ENCODE measurements at regions of chr7 and their contacts with region 1.

Region 1: GRCh38 chr7:107743567-107744344 is at the start of gene CBLL1:
- DNase-seq: peak; percentile 95 to 98 (median 97)
- ATAC-seq: peak; percentile 95
- H3K4me3 ChIP-seq: peak within 1 kb of the TSS; percentile 90
- H3K4me3 Mint-ChIP-seq: peak within 1 kb of the TSS; percentile 93 to 100 (median 98)
- H3K27ac ChIP-seq: peak within 1 kb of the TSS; percentile 99
- H3K27ac Mint-ChIP-seq: peak within 1 kb of the TSS; percentile 99 to 100 (median 100)
- H3K4me1 ChIP-seq: peaks cover 35 to 36% of the 10 kb centered on the region in 2 donors
- H3K4me1 Mint-ChIP-seq: peaks cover 28 to 58% (median 54%) of the 10 kb centered on the region in 7 donors
- H3K27me3 ChIP-seq: no peaks in the 10 kb centered on the region
- H3K27me3 Mint-ChIP-seq: peaks cover 0 to 3% (median 0%) of the 10 kb centered on the region in 5 donors
- total RNA-seq, gene CBLL1: 41.5 to 54.4 (median 51.1) TPM

Region 2: DNA sequence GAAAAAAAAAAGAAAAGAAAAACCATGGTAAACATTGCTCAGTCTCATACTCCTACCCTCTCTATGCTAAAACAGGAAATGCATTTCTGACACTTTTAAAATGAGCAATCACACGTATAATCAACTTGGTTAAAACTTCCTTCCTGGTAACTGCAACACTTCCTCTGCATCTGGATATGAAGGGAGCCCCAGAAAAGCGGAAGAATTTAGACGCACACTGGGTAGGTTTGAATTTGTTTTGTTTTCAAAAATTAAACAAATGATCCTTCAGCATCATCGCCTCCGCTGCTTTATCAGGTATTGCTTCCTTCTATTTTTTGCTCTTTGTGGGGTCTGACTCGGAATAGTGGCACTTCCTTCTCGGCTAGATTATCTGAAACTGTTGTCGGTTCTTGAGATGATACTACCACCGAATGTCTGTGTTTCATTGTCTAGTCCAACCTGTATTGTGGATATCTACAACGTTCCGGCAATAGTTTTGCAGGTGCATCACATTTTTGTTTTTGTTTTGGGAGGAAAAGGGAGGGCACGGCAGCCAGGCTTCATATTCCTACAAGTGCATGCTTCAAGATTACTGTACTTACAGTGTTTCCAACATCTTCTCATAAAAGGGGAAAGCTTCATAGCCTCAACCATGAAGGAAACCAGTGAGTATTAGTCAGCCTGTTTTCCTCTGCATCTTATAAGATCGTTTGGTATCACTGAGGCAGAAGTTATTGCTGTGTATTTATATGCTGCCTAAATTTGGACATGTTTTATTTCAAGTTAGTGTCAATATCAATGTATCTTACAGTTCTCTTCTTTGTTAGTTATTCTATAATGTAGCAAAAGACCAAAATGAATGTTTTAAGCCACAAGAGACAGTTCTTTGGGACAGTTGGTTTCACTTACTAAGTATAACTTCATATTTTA is 878.4 kb before region 1 on chr7 and contains the start of gene PIK3CG:
- CTCF ChIA-PET with region 1: no interaction called
- POLR2A ChIA-PET with region 1: interaction called, 10 read pairs
- intact Hi-C with region 1: loop called (anchors 2 kb)
- DNase-seq: peak in 7 of 9 donors; percentile 43 to 77 (median 70)
- ATAC-seq: peak; percentile 96
- H3K4me3 ChIP-seq: peak within 1 kb of the TSS; percentile 62
- H3K4me3 Mint-ChIP-seq: peak within 1 kb of the TSS; percentile 86 to 98 (median 94)
- H3K27ac ChIP-seq: peak within 1 kb of the TSS; percentile 75
- H3K27ac Mint-ChIP-seq: peak within 1 kb of the TSS; percentile 90 to 96 (median 95)
- H3K4me1 ChIP-seq: peaks cover 50% of the 10 kb centered on the region in 2 donors
- H3K4me1 Mint-ChIP-seq: peaks cover 44 to 85% (median 72%) of the 10 kb centered on the region in 7 donors
- H3K27me3 ChIP-seq: no peaks in the 10 kb centered on the region
- H3K27me3 Mint-ChIP-seq: no peaks in the 10 kb centered on the region
- total RNA-seq, gene PIK3CG: 25.1 to 54.9 (median 30.6) TPM

Region 3: DNA sequence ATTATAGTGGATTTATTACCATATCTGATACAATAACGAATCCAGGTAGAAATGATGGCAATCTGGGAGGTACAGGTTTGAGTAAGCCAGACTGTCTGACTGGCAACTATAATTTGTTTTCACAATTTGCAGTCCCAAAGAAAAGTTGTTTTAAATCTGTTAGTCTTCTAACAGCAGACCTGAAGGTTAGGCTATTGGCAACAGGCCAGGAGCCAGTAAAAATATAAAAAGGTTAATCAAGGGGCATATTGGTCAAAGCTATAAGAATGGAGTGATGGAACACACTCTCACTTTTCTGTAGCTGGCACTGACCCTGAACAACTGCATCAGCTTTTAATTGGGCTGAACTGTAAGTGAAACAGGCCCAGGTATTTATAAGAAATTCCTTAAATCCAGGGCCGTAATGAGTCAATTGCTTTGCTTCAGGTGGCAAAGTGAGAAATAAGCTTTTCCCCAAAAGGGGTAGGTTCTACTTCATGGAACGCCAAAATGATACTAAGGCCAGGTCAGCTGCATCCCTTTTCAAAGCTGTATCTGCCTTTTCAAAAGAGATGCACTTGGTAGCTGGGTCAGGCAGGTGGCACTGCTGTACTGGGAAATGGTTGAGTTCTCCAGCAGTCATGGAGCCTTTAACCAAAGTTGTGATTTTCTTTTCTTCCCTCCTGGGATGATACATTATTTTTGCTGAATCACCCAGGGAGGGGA is 280.9 kb before region 1 on chr7:
- CTCF ChIA-PET with region 1: interaction called, 8 read pairs
- POLR2A ChIA-PET with region 1: no interaction called
- intact Hi-C with region 1: loop called (anchors 1 to 5 kb)
- DNase-seq: peak; percentile 10 to 47 (median 36)
- ATAC-seq: peak; percentile 82
- H3K4me3 ChIP-seq: no peak overlapping the region
- H3K4me3 Mint-ChIP-seq: no peak overlapping the region
- H3K27ac ChIP-seq: no peak overlapping the region
- H3K27ac Mint-ChIP-seq: peak overlapping the region in 1 of 9 donors; percentile 19
- H3K4me1 ChIP-seq: no peaks in the 10 kb centered on the region
- H3K4me1 Mint-ChIP-seq: peaks cover 0 to 6% (median 0%) of the 10 kb centered on the region in 7 donors
- H3K27me3 ChIP-seq: no peaks in the 10 kb centered on the region
- H3K27me3 Mint-ChIP-seq: no peaks in the 10 kb centered on the region

Region 4: DNA sequence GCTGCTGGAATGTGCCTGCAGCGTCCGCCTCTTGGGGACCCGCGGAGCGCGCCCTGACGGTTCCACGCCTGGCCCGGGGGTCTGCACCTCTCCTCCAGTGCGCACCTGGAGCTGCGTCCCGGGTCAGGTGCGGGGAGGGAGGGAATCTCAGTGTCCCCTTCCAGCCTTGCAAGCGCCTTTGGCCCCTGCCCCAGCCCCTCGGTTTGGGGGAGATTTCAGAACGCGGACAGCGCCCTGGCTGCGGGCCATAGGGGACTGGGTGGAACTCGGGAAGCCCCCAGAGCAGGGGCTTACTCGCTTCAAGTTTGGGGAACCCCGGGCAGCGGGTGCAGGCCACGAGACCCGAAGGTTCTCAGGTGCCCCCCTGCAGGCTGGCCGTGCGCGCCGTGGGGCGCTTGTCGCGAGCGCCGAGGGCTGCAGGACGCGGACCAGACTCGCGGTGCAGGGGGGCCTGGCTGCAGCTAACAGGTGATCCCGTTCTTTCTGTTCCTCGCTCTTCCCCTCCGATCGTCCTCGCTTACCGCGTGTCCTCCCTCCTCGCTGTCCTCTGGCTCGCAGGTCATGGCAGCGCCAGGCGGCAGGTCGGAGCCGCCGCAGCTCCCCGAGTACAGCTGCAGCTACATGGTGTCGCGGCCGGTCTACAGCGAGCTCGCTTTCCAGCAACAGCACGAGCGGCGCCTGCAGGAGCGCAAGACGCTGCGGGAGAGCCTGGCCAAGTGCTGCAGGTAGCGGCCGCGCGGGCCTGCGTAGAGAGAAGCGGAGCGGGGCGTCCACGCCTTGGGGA is 82.5 kb before region 1 on chr7:
- CTCF ChIA-PET with region 1: no interaction called
- POLR2A ChIA-PET with region 1: no interaction called
- intact Hi-C with region 1: loop called in 1 of 2 experiments (anchors 1 kb)
- DNase-seq: peak in 7 of 9 donors; percentile 12 to 60 (median 14)
- ATAC-seq: peak; percentile 66
- H3K4me3 ChIP-seq: peak overlapping the region; percentile 30
- H3K4me3 Mint-ChIP-seq: peak overlapping the region; percentile 56 to 96 (median 84)
- H3K27ac ChIP-seq: no peak overlapping the region
- H3K27ac Mint-ChIP-seq: peak overlapping the region in 1 of 9 donors; percentile 87
- H3K4me1 ChIP-seq: peaks cover 0 to 2% of the 10 kb centered on the region in 2 donors
- H3K4me1 Mint-ChIP-seq: peaks cover 12 to 44% (median 21%) of the 10 kb centered on the region in 7 donors
- H3K27me3 ChIP-seq: peaks cover 3 to 19% of the 10 kb centered on the region in 2 donors
- H3K27me3 Mint-ChIP-seq: peaks cover 0 to 67% (median 49%) of the 10 kb centered on the region in 5 donors

Region 5: DNA sequence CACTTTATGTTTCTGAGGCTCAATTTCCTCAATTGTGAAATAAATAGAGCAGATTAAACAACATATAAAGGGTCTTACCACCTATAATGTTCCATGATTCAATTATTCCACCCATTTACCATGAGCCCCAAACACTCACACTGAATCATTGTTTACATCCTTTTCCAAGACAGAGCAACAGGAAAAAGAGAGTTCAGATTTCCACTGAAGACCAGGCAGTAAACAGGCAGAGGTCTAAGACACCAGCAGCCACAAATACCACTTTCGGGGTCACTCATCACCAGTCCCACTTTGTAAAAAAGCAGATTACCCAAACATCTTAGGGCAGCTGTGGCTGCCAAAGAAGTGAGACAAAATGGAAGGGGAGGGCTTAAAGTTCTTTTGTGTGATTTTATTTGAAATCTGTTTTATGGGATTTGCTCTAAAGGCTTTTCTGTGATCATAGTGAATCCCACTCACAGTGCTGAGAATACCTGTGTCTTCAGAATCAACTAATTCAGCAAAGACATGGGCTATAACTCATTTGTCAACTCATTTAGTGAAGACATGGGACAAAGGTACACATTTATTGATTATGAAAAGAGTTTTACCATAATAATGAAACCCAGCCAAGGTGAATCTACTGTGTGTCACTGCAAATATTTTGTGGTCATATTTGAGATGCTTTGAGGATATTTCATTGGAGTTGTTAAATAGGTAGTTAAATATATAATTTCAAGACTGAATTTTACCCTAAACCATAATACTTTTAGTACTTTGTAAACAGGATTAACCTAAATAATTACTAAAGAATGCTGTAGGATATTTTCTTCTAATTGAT is 122.4 kb after region 1 on chr7:
- CTCF ChIA-PET with region 1: interaction called, 9 read pairs
- POLR2A ChIA-PET with region 1: interaction called, 11 read pairs
- intact Hi-C with region 1: no loop called
- DNase-seq: peak in 1 of 9 donors; percentile 40
- ATAC-seq: no peak
- H3K4me3 ChIP-seq: no peak overlapping the region
- H3K4me3 Mint-ChIP-seq: peak overlapping the region in 1 of 10 donors; percentile 52
- H3K27ac ChIP-seq: no peak overlapping the region
- H3K27ac Mint-ChIP-seq: peak overlapping the region in 2 of 9 donors; percentile 11 to 86
- H3K4me1 ChIP-seq: peaks cover 0 to 4% of the 10 kb centered on the region in 2 donors
- H3K4me1 Mint-ChIP-seq: peaks cover 8 to 29% (median 12%) of the 10 kb centered on the region in 7 donors
- H3K27me3 ChIP-seq: no peaks in the 10 kb centered on the region
- H3K27me3 Mint-ChIP-seq: peaks cover 0 to 2% (median 0%) of the 10 kb centered on the region in 5 donors

Region 6: DNA sequence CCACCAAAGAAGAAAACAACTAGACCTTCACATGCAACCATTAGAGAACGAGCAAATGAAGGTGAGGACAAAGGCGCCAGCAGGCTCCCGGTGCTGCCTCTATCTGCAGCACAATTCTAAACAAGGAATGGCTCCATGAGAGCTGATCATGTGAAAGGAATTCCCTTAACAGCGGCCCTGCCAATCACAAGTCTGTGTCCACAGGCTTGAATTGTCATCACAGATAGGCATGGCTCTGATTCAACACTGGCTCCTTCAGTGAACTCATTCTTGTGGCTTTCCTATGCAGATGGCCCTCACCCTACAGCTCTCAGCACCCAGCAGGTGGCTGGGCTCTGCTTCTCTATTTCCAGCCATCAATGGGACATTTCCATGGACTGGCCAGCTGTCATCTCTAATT is 223.0 kb after region 1 on chr7:
- CTCF ChIA-PET with region 1: no interaction called
- POLR2A ChIA-PET with region 1: no interaction called
- intact Hi-C with region 1: no loop called
- DNase-seq: no peak
- ATAC-seq: no peak
- H3K4me3 ChIP-seq: no peak overlapping the region
- H3K4me3 Mint-ChIP-seq: no peak overlapping the region
- H3K27ac ChIP-seq: no peak overlapping the region
- H3K27ac Mint-ChIP-seq: no peak overlapping the region
- H3K4me1 ChIP-seq: no peaks in the 10 kb centered on the region
- H3K4me1 Mint-ChIP-seq: no peaks in the 10 kb centered on the region
- H3K27me3 ChIP-seq: no peaks in the 10 kb centered on the region
- H3K27me3 Mint-ChIP-seq: peaks cover 0 to 5% (median 4%) of the 10 kb centered on the region in 5 donors

Region 7: DNA sequence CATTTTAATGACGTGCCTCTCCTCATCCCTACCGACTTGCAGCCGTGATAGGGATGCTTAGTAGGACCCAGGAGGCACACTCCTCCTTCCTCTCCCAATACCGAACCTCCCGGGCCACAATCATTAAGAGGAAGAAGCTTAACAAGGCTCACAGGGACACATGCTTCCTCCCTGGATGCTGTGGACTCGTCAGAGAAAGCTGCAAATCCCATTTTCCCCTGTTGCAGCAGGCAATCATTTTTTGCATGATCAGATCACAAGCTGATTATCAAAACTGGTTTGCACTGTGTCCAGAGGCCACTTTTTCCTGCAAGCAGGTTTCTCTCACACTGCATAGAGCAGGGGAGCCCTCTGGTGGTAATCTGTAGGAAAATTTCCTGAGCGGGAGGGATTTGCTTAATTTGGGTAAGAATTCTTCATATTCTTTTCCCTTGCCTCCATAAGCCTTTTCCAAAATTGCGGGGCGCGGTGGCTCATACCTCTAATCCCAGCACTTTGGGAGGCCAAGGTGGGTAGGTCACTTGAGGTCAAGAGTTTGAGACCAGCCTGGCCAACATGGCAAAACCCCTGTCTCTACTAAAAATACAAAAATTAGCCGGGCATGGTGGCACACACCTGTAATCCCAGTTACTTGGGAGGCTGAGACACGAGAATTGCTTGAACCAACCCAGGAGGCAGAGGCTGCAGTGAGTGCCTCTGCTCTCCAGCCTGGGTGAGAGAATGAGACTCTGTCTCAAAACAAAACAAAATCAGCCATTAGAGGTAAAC is 402.5 kb after region 1 on chr7:
- CTCF ChIA-PET with region 1: no interaction called
- POLR2A ChIA-PET with region 1: no interaction called
- intact Hi-C with region 1: loop called in 1 of 2 experiments (anchors 5 kb)
- DNase-seq: peak in 7 of 9 donors; percentile 12 to 52 (median 44)
- ATAC-seq: peak; percentile 67
- H3K4me3 ChIP-seq: no peak overlapping the region
- H3K4me3 Mint-ChIP-seq: no peak overlapping the region
- H3K27ac ChIP-seq: no peak overlapping the region
- H3K27ac Mint-ChIP-seq: no peak overlapping the region
- H3K4me1 ChIP-seq: no peaks in the 10 kb centered on the region
- H3K4me1 Mint-ChIP-seq: no peaks in the 10 kb centered on the region
- H3K27me3 ChIP-seq: no peaks in the 10 kb centered on the region
- H3K27me3 Mint-ChIP-seq: peaks cover 0 to 24% (median 9%) of the 10 kb centered on the region in 5 donors

Region 8: DNA sequence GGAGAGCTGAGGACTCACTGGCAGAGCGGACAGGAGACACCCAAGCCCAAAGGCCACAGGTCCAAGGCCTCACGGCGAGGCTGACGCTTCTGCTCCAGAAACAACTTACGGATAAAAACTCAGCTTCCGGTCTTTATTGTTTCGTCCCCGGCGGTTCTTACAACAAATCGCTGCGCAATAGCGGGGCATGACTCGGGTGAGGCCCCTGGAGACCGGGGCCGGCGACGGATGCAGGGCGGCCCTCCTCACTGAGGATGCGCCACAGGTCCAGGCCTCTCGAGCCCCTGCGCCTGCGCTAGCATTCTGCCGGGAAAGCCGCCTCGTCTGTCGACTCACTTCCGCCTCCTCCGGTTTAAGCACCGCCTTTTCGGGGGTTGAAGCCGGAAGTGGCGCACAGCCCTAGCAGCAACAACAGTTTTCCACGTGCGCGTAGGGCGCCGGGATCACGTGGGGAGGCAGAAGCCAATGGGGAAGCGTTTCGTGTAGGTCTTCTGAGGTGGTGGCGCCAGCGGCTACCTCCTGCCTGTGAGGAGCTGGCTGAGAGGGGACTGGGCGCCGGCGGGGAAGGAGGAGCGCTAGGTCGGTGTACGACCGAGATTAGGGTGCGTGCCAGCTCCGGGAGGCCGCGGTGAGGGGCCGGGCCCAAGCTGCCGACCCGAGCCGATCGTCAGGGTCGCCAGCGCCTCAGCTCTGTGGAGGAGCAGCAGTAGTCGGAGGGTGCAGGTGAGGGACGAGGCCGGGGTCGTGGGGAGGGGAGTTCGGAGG is 825.8 kb after region 1 on chr7 and contains the starts of genes DNAJB9 and THAP5:
- CTCF ChIA-PET with region 1: no interaction called
- POLR2A ChIA-PET with region 1: interaction called, 7 read pairs
- intact Hi-C with region 1: loop called in 1 of 2 experiments (anchors 1 kb)
- DNase-seq: peak; percentile 94 to 100 (median 100)
- ATAC-seq: peak; percentile 94
- H3K4me3 ChIP-seq: peak within 1 kb of the TSS; percentile 86
- H3K4me3 Mint-ChIP-seq: peak within 1 kb of the TSS; percentile 93 to 99 (median 98)
- H3K27ac ChIP-seq: peak within 1 kb of the TSS; percentile 98
- H3K27ac Mint-ChIP-seq: peak within 1 kb of the TSS; percentile 98 to 100 (median 100)
- H3K4me1 ChIP-seq: peaks cover 21 to 34% of the 10 kb centered on the region in 2 donors
- H3K4me1 Mint-ChIP-seq: peaks cover 18 to 81% (median 68%) of the 10 kb centered on the region in 7 donors
- H3K27me3 ChIP-seq: no peaks in the 10 kb centered on the region
- H3K27me3 Mint-ChIP-seq: peaks cover 0 to 3% (median 0%) of the 10 kb centered on the region in 5 donors
- total RNA-seq, gene DNAJB9: 22.7 to 50.0 (median 29.3) TPM
- total RNA-seq, gene THAP5: 21.0 to 54.7 (median 30.8) TPM